Ascending aorta (tissue), 2 donors: ENCODE measurements at regions of chr17 and their contacts with region 1.

Region 1: GRCh38 chr17:80959330-80960036 is 32.2 kb upstream of the CHMP6 start:
- DNase-seq: peak; percentile 81 to 95
- H3K4me3 ChIP-seq: no peak overlapping the region
- H3K27ac ChIP-seq: peak overlapping the region; percentile 84 to 88
- H3K4me1 ChIP-seq: peaks cover 12 to 22% of the 10 kb centered on the region in 2 donors
- H3K27me3 ChIP-seq: no peaks in the 10 kb centered on the region
- CTCF ChIP-seq: peak in 1 of 3 experiments; percentile 8

Region 2: DNA sequence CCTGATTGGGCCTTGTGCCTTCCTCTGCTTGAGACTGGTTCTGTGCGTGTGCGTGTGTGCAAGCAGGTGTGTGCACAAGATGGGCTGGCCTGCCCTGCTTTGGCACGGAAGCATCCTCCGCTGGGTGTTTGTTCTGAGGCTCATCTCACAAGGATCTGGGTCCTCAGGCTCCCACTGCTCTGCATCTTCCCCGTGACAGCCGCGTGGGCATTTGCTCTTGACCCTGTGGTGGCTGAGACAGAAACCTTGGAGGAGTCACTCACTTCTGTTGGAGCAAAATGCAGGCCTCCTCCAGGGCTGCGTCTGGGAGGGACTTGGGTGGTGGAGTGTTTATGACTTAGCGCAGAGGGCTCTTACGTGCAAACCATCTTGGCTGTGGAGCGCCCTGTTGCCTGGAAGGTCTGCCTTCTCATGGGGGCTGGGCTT is 295.7 kb before region 1 on chr17:
- intact Hi-C with region 1: no loop called
- DNase-seq: no peak
- H3K4me3 ChIP-seq: no peak overlapping the region
- H3K27ac ChIP-seq: no peak overlapping the region
- H3K4me1 ChIP-seq: no peaks in the 10 kb centered on the region
- H3K27me3 ChIP-seq: no peaks in the 10 kb centered on the region
- CTCF ChIP-seq: no peak

Region 3: GRCh38 chr17:80845863-80846671 is 113.4 kb before region 1 on chr17:
- intact Hi-C with region 1: no loop called
- DNase-seq: peak in 1 of 2 donors; percentile 58
- H3K4me3 ChIP-seq: no peak overlapping the region
- H3K27ac ChIP-seq: no peak overlapping the region
- H3K4me1 ChIP-seq: no peaks in the 10 kb centered on the region
- H3K27me3 ChIP-seq: no peaks in the 10 kb centered on the region
- CTCF ChIP-seq: no peak

Region 4: DNA sequence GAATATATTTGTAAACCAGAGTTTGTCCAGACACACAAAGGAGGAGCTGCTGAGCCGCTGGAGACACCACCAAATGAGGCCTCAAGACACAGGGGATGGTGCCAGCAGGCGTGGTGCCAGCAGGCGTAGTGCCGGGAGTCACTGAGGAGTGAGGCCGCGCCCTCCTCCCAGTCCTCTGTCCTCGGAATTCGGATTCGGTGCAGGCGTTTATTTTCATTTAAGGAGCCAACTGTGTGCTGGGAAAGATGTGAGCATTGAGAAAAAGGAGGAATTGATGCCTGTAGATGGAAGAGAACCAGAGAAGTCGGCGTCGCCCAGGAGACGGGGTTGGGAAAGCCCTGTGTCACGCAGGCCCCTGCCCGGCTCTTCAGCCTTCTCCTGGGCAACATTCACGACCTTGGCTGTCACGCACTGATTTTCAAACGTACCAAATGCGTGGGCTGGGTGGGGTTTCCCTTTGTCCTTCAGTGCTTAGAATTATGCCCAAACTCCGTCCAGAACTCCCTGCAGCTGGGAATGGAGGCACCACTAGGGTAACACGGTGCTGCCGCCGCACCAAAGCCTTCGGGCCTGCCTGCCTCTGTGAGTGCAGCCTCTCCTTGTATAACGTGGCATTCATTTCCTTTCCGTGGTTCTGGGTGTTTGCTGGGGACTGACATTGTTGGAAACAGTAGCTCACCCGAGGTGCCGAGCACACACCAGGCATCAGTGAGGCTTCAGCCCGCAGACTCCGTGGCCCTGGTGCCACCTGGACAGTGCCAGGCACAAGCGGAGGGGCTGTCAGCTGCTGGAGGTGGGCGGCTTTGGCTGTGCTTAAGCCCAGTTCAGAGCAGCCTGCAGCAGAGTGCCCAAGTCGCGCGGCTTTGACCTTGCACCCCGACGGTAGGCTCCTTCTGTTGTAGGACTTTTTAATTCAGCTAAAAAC is 16.8 kb before region 1 on chr17:
- intact Hi-C with region 1: loop called (anchors 1 kb)
- DNase-seq: peak; percentile 68 to 95
- H3K4me3 ChIP-seq: peak overlapping the region in 1 of 2 donors; percentile 5
- H3K27ac ChIP-seq: peak overlapping the region; percentile 72 to 75
- H3K4me1 ChIP-seq: peaks cover 4 to 11% of the 10 kb centered on the region in 2 donors
- H3K27me3 ChIP-seq: no peaks in the 10 kb centered on the region
- CTCF ChIP-seq: peak in 2 of 3 experiments; percentile 20 to 37